ENCODE measurements at regions of chr19 and their contacts with region 1.

Region 1: GRCh38 chr19:13042443-13043130 is 47.3 kb downstream of the NFIX start:
- DNase-seq: no peak
- ATAC-seq: no peak
- H3K4me3 ChIP-seq: no peak overlapping the region
- H3K27ac ChIP-seq: no peak overlapping the region
- H3K4me1 ChIP-seq: peaks cover 52% of the 10 kb centered on the region
- H3K27me3 ChIP-seq: no peaks in the 10 kb centered on the region
- CTCF ChIP-seq: no peak

Region 2: GRCh38 chr19:13002166-13002898 is 40.3 kb before region 1 on chr19:
- CTCF ChIA-PET with region 1: no interaction called
- POLR2A ChIA-PET with region 1: interaction called, 19 read pairs
- in situ Hi-C with region 1: no loop called
- intact Hi-C with region 1: no loop called
- DNase-seq: no peak
- ATAC-seq: no peak
- H3K4me3 ChIP-seq: no peak overlapping the region
- H3K27ac ChIP-seq: no peak overlapping the region
- H3K4me1 ChIP-seq: peaks cover 41% of the 10 kb centered on the region
- H3K27me3 ChIP-seq: no peaks in the 10 kb centered on the region
- CTCF ChIP-seq: no peak

Region 3: GRCh38 chr19:13053761-13054625 is 11.4 kb after region 1 on chr19:
- CTCF ChIA-PET with region 1: no interaction called
- POLR2A ChIA-PET with region 1: no interaction called
- in situ Hi-C with region 1: no loop called
- intact Hi-C with region 1: no loop called
- DNase-seq: peak; percentile 38
- ATAC-seq: peak; percentile 74
- H3K4me3 ChIP-seq: peak overlapping the region in 1 of 2 experiments; percentile 20; a peak in 1 of 4 replicates
- H3K27ac ChIP-seq: peak overlapping the region; percentile 99
- H3K4me1 ChIP-seq: peaks cover 94% of the 10 kb centered on the region
- H3K27me3 ChIP-seq: no peaks in the 10 kb centered on the region
- CTCF ChIP-seq: no peak

Region 4: DNA sequence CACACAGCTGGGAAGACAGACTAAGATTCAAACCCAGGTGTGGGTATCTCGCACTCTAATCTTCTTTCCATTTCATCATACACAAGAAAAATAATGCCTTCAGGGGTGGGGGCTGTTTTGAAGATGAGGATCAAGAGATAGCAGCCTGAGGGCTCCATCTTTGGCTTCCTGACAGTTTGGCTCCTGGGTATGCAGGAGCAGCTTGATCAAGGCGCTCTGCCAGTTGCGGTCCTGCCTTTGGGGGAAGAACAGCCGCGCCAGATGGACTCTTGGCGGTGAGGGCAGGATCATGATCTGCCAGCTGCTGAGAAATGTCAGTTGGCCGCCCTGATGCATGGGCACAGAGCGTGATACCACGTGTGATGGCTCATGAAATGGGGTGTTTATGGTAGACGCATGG is 226.8 kb after region 1 on chr19:
- CTCF ChIA-PET with region 1: no interaction called
- POLR2A ChIA-PET with region 1: no interaction called
- in situ Hi-C with region 1: no loop called
- intact Hi-C with region 1: no loop called
- DNase-seq: no peak
- ATAC-seq: no peak
- H3K4me3 ChIP-seq: no peak overlapping the region
- H3K27ac ChIP-seq: no peak overlapping the region
- H3K4me1 ChIP-seq: no peaks in the 10 kb centered on the region
- H3K27me3 ChIP-seq: no peaks in the 10 kb centered on the region
- CTCF ChIP-seq: no peak

Region 5: GRCh38 chr19:13396250-13397080 is 353.9 kb after region 1 on chr19:
- CTCF ChIA-PET with region 1: no interaction called
- POLR2A ChIA-PET with region 1: no interaction called
- in situ Hi-C with region 1: no loop called
- intact Hi-C with region 1: no loop called
- DNase-seq: no peak
- ATAC-seq: no peak
- H3K4me3 ChIP-seq: no peak overlapping the region
- H3K27ac ChIP-seq: no peak overlapping the region
- H3K4me1 ChIP-seq: peaks cover 11% of the 10 kb centered on the region
- H3K27me3 ChIP-seq: no peaks in the 10 kb centered on the region
- CTCF ChIP-seq: no peak

Region 6: GRCh38 chr19:13784731-13785452 is 742.3 kb after region 1 on chr19:
- CTCF ChIA-PET with region 1: no interaction called
- POLR2A ChIA-PET with region 1: no interaction called
- in situ Hi-C with region 1: no loop called
- intact Hi-C with region 1: no loop called
- DNase-seq: no peak
- ATAC-seq: peak; percentile 86
- H3K4me3 ChIP-seq: no peak overlapping the region
- H3K27ac ChIP-seq: peak overlapping the region; percentile 69
- H3K4me1 ChIP-seq: peaks cover 10% of the 10 kb centered on the region
- H3K27me3 ChIP-seq: no peaks in the 10 kb centered on the region
- CTCF ChIP-seq: peak; percentile 83